Mammary epithelial cell (primary cell): ENCODE measurements at regions of chr17 and their contacts with region 1.

Region 1: DNA sequence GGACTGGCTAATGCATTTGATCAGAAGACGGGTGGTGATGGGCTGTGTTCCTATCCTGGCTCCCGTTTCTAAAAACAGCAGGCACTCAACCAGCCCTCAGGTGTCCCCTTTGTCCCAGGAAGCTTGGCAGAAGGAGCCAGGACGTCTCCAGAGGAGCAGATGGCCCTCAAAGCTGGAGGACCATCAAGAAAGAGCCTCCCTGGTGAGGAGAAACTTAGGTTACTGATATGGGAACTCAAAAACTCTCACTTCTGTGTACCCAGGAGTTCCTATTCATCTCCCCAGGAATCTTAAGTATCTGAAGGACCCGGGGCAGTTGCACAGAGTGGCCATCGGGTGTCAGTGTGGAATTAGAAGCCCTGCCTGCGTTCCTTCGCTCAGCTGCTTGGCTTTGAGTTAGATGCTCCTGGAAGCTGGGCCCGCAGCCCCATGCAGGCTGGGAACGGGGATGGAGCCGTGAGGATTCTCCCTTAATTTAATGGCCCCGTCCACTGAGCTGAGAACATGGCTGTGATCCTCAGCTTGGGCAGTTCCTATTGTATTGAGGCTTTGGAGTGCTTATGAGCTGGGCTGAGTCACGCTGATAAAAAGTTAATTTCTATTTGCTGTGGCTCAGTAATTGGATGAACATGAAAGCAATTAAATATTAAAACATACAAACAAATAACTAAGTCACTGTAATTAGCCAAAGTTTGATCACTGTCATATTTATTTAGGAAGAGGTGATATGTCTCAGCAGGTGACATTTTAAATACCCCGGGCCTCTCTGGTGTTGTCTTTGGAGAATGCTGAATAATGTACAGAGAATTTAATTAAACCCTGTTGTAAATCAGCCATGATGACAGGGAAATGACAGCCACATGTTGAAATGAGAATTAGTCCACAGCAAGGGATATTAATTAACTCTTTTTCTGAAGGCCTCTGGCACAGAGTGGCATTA is 402.1 kb downstream of the SEC14L1 start:
- DNase-seq: peak; percentile 60
- H3K4me3 ChIP-seq: no peak overlapping the region
- H3K27ac ChIP-seq: no peak overlapping the region
- H3K4me1 ChIP-seq: no peaks in the 10 kb centered on the region
- H3K27me3 ChIP-seq: no peaks in the 10 kb centered on the region
- CTCF ChIP-seq: peak; percentile 96 to 99

Region 2: GRCh38 chr17:76994237-76994637 is 548.6 kb before region 1 on chr17:
- CTCF ChIA-PET with region 1: no interaction called
- dilution Hi-C with region 1: loop called (anchors 5 kb)
- in situ Hi-C with region 1: no loop called
- intact Hi-C with region 1: no loop called
- DNase-seq: no peak
- H3K4me3 ChIP-seq: no peak overlapping the region
- H3K27ac ChIP-seq: no peak overlapping the region
- H3K4me1 ChIP-seq: no peaks in the 10 kb centered on the region
- H3K27me3 ChIP-seq: no peaks in the 10 kb centered on the region
- CTCF ChIP-seq: no peak

Region 3: DNA sequence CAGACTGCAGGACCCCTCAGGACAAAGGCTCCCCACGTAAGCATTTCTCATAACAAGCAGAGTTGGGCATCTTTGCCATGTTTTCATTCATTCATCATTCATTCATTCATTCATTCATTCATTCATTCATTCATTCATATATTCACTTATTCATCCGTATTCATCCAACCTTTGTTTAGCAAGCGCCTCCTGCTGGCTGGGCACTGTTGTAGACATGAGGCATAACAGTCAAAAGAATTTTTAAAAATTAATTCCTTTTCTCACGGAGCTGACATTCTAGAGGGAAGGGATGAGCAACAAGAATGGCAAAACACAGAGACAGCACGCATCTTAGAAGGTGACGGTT is 64.0 kb after region 1 on chr17:
- CTCF ChIA-PET with region 1: no interaction called
- dilution Hi-C with region 1: no loop called
- in situ Hi-C with region 1: no loop called
- intact Hi-C with region 1: loop called (anchors 2 kb)
- DNase-seq: no peak
- H3K4me3 ChIP-seq: no peak overlapping the region
- H3K27ac ChIP-seq: no peak overlapping the region
- H3K4me1 ChIP-seq: peaks cover 18% of the 10 kb centered on the region
- H3K27me3 ChIP-seq: no peaks in the 10 kb centered on the region
- CTCF ChIP-seq: peak in 1 of 2 donors; percentile 3

Region 4: GRCh38 chr17:77734341-77735080 is 191.7 kb after region 1 on chr17:
- CTCF ChIA-PET with region 1: no interaction called
- dilution Hi-C with region 1: loop called (anchors 5 kb)
- in situ Hi-C with region 1: no loop called
- intact Hi-C with region 1: no loop called
- DNase-seq: no peak
- H3K4me3 ChIP-seq: no peak overlapping the region
- H3K27ac ChIP-seq: no peak overlapping the region
- H3K4me1 ChIP-seq: peaks cover 3% of the 10 kb centered on the region
- H3K27me3 ChIP-seq: no peaks in the 10 kb centered on the region
- CTCF ChIP-seq: peak in 1 of 2 donors; percentile 6

Region 5: GRCh38 chr17:77810536-77810935 is 267.7 kb after region 1 on chr17:
- CTCF ChIA-PET with region 1: no interaction called
- dilution Hi-C with region 1: loop called (anchors 5 kb)
- in situ Hi-C with region 1: no loop called
- intact Hi-C with region 1: no loop called
- DNase-seq: no peak
- H3K4me3 ChIP-seq: no peak overlapping the region
- H3K27ac ChIP-seq: no peak overlapping the region
- H3K4me1 ChIP-seq: no peaks in the 10 kb centered on the region
- H3K27me3 ChIP-seq: no peaks in the 10 kb centered on the region
- CTCF ChIP-seq: no peak

Region 6: DNA sequence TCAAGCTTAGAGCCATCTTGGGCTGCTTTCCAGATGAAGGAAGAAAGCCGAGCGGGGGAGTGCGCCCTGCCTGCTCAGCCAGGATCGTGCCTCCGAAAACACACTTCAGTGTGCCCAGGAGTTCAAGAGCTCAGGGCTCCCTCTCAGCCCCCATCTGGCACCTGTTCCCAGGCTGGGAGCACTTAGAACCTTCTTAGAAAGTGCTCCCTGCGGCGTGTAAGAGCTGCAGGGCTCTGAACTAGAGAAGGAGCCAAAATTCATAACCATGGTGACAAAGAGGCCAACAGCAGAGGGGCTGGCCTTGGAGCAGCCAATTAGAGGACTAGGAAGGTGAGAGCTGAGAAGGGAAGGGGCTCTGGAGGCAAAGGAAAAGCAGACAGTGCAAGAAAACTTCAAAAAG is 356.7 kb after region 1 on chr17:
- CTCF ChIA-PET with region 1: no interaction called
- dilution Hi-C with region 1: loop called (anchors 5 kb)
- in situ Hi-C with region 1: no loop called
- intact Hi-C with region 1: loop called (anchors 10 kb)
- DNase-seq: no peak
- H3K4me3 ChIP-seq: no peak overlapping the region
- H3K27ac ChIP-seq: no peak overlapping the region
- H3K4me1 ChIP-seq: no peaks in the 10 kb centered on the region
- H3K27me3 ChIP-seq: no peaks in the 10 kb centered on the region
- CTCF ChIP-seq: no peak

Region 7: GRCh38 chr17:78013683-78014467 is 471.1 kb after region 1 on chr17:
- CTCF ChIA-PET with region 1: interaction called, 6 read pairs
- dilution Hi-C with region 1: no loop called
- in situ Hi-C with region 1: loop called (anchors 10 to 25 kb)
- intact Hi-C with region 1: loop called (anchors 1 kb)
- DNase-seq: peak; percentile 48
- H3K4me3 ChIP-seq: no peak overlapping the region
- H3K27ac ChIP-seq: no peak overlapping the region
- H3K4me1 ChIP-seq: no peaks in the 10 kb centered on the region
- H3K27me3 ChIP-seq: no peaks in the 10 kb centered on the region
- CTCF ChIP-seq: peak; percentile 55 to 60